ENCODE measurements at regions of chr13 and their contacts with region 1.

Region 1: DNA sequence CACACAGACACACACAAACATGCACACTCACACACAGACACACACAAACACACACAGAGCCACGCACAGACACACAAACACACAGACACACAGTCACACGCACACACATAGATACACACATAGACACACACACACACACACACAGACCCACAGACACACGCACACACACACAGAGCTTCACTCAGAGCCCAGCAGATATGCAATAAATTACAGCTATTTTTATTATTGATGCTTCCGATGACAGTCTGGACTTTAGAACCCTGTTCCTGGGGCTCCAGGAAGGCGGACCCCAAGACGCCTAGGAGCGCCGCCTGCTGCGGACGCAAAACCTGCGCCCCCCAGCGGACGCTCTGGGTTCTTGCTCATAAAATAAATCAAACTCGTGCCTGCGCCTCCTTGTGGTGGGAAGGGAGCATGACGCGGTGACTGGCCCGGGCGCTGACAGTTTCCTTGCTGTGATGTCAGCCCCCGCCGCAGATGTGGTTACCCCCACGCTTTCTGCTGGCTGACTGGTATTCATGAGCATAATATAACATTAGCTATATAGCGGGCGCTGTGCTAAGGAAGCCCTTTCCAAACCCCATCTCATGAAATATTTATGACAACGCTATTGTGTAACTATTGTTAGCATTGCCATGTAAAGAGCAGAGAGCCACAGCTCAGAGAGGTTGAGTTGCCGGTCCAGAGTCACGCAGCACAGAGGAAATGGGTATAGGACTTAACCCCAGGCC is 64.4 kb upstream of the TM9SF2 start:
- DNase-seq: peak; percentile 42 to 81
- ATAC-seq: peak; percentile 72 to 78
- H3K4me3 ChIP-seq: peak overlapping the region; percentile 32; the same call in 1 of the 3 replicates
- H3K27ac ChIP-seq: peak overlapping the region in 1 of 2 experiments; percentile 63; a peak in 1 of 6 replicates
- H3K4me1 ChIP-seq: peaks cover 12% of the 10 kb centered on the region; the same call in 2 of the 3 replicates
- CTCF ChIP-seq: peak; percentile 99
- EP300 ChIP-seq: no peak
- POLR2A ChIP-seq: no peak
- RAD21 ChIP-seq: peak; percentile 71 to 81

Region 2: DNA sequence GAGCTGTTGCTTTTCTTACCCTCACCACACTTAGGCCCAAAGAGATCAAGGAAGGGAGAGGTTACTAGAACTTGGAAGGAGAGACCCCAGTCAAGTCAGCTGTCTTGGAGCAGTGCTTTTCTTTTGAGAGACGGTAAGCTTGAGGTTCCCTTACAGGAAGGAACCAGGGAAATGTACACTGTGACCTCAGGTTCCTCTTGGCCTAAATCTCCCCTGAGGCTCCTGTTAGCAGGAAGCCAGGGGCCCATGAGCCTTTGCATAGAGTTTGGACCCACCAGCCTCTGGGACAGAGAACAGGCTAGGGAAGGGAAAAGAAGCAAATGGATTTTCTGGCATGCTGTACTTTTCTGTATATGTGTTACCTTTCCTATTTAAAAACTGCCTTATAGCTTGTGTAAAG is 172.8 kb before region 1 on chr13:
- CTCF ChIA-PET with region 1: interaction called, 106 read pairs
- POLR2A ChIA-PET with region 1: no interaction called
- DNase-seq: no peak
- ATAC-seq: no peak
- H3K4me3 ChIP-seq: no peak overlapping the region
- H3K27ac ChIP-seq: no peak overlapping the region
- H3K4me1 ChIP-seq: no peaks in the 10 kb centered on the region
- CTCF ChIP-seq: no peak
- EP300 ChIP-seq: no peak
- POLR2A ChIP-seq: no peak
- RAD21 ChIP-seq: no peak

Region 3: GRCh38 chr13:99281811-99282263 is 155.0 kb before region 1 on chr13:
- CTCF ChIA-PET with region 1: interaction called, 10 read pairs
- POLR2A ChIA-PET with region 1: no interaction called
- DNase-seq: no peak
- ATAC-seq: no peak
- H3K4me3 ChIP-seq: no peak overlapping the region
- H3K27ac ChIP-seq: no peak overlapping the region
- H3K4me1 ChIP-seq: no peaks in the 10 kb centered on the region
- CTCF ChIP-seq: no peak
- EP300 ChIP-seq: no peak
- POLR2A ChIP-seq: no peak
- RAD21 ChIP-seq: no peak

Region 4: GRCh38 chr13:99417201-99418102 is 19.4 kb before region 1 on chr13:
- CTCF ChIA-PET with region 1: interaction called, 21 read pairs
- POLR2A ChIA-PET with region 1: no interaction called
- DNase-seq: no peak
- ATAC-seq: no peak
- H3K4me3 ChIP-seq: no peak overlapping the region
- H3K27ac ChIP-seq: no peak overlapping the region
- H3K4me1 ChIP-seq: no peaks in the 10 kb centered on the region
- CTCF ChIP-seq: no peak
- EP300 ChIP-seq: no peak
- POLR2A ChIP-seq: no peak
- RAD21 ChIP-seq: no peak

Region 5: DNA sequence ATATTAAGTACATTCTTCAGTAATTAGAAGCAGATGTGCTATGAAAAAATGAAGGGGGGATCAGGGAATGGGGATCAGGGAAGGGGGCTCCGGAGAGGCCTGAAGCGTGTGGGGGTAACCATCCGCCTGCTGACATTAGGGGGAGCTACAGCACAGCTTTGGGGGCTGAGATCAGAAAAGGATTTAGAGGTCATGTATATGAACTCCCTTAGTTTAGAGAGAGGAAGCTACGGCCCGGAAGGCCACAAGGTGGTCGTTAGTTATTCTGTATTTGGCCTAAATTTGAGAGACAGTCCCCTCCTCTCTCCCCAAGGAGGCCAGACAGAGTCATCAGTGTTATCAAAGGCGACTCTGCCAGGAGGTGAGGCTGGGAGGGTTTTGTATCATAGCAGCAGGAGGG is 163.5 kb after region 1 on chr13:
- CTCF ChIA-PET with region 1: no interaction called
- POLR2A ChIA-PET with region 1: no interaction called
- DNase-seq: no peak
- ATAC-seq: peak in 1 of 2 experiments; percentile 25; a peak in 1 of 6 replicates
- H3K4me3 ChIP-seq: no peak overlapping the region
- H3K27ac ChIP-seq: no peak overlapping the region
- H3K4me1 ChIP-seq: no peaks in the 10 kb centered on the region
- CTCF ChIP-seq: peak; percentile 13; the same call in 1 of the 3 replicates
- EP300 ChIP-seq: no peak
- POLR2A ChIP-seq: no peak
- RAD21 ChIP-seq: peak in 1 of 2 experiments; percentile 38; a peak in 1 of 5 replicates

Region 6: DNA sequence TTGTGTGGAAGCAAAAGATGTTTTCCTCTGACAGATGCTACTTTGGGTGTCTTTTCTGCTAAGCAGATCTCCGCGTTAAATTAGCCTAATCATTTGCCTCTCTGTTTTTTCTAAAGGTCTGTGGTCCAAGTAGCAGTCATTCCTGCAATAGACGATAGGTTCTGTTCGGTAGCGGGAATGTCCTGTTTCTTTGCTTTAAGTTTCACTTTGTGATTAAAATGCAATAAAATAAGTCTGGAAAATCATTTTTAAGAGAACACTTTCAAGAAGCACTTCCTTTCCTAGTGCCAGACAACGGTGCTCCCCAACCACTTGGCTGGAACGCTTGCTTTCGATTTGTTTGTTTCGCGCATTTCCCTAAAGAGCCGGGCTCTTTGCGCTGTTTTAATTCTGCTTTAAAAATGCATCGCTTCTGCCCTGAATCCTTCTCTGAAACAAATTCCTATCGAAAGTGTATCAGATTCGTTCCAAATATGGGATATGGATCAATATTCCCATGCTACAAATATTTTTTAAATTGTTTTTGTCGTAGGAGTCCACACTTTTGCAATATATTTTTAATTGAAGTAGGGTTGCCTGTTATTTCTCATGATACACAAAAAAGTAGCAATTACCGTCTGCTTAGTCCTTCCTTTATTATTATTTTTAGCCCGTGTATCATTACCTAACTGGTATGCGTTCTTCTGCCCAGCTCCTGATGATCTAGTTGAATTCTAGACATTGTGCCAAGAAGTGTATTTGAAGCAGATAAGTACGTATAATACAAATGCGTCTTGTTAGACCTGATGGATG is 558.9 kb after region 1 on chr13:
- CTCF ChIA-PET with region 1: no interaction called
- POLR2A ChIA-PET with region 1: no interaction called
- DNase-seq: no peak
- ATAC-seq: no peak
- H3K4me3 ChIP-seq: peak overlapping the region; percentile 33; the same call in 2 of the 3 replicates
- H3K27ac ChIP-seq: no peak overlapping the region
- H3K4me1 ChIP-seq: peaks cover 11% of the 10 kb centered on the region
- CTCF ChIP-seq: no peak
- EP300 ChIP-seq: no peak
- POLR2A ChIP-seq: no peak
- RAD21 ChIP-seq: no peak

Region 7: DNA sequence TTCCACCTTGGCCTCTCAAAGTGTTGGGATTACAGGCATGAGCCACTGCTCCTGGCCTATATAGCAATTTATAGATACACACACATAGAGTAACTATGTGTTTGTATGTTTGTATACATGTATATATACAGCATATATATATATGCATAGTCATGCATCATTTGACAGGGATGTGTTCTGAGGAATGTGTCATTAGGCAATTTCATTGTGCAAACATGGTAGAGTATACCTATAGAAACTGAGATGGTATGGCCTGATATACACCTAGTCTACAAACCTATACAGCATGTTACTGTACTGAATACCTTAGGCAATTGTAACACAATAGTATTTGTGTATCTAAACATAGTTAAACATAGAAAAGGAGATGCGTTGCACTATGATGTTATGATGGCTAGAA is 599.1 kb after region 1 on chr13:
- CTCF ChIA-PET with region 1: no interaction called
- POLR2A ChIA-PET with region 1: no interaction called
- DNase-seq: no peak
- ATAC-seq: no peak
- H3K4me3 ChIP-seq: no peak overlapping the region
- H3K27ac ChIP-seq: no peak overlapping the region
- H3K4me1 ChIP-seq: peaks cover 14% of the 10 kb centered on the region; the same call in 2 of the 3 replicates
- CTCF ChIP-seq: no peak
- EP300 ChIP-seq: no peak
- POLR2A ChIP-seq: no peak
- RAD21 ChIP-seq: no peak